K562 (cell line): ENCODE measurements at regions of chr14 and their contacts with region 1.

Region 1: GRCh38 chr14:22653012-22653621 is 9.0 kb upstream of the OR6J1 start:
- DNase-seq: peak; percentile 47 to 68 (median 58)
- ATAC-seq: peak; percentile 87
- H3K4me3 ChIP-seq: no peak overlapping the region
- H3K27ac ChIP-seq: no peak overlapping the region
- H3K4me1 ChIP-seq: no peaks in the 10 kb centered on the region; a peak in 1 of 5 replicates
- H3K27me3 ChIP-seq: no peaks in the 10 kb centered on the region
- CTCF ChIP-seq: peak; percentile 85 to 86 (median 86)
- EP300 ChIP-seq: no peak
- POLR2A ChIP-seq: no peak
- RAD21 ChIP-seq: peak; percentile 80 to 94

Region 2: DNA sequence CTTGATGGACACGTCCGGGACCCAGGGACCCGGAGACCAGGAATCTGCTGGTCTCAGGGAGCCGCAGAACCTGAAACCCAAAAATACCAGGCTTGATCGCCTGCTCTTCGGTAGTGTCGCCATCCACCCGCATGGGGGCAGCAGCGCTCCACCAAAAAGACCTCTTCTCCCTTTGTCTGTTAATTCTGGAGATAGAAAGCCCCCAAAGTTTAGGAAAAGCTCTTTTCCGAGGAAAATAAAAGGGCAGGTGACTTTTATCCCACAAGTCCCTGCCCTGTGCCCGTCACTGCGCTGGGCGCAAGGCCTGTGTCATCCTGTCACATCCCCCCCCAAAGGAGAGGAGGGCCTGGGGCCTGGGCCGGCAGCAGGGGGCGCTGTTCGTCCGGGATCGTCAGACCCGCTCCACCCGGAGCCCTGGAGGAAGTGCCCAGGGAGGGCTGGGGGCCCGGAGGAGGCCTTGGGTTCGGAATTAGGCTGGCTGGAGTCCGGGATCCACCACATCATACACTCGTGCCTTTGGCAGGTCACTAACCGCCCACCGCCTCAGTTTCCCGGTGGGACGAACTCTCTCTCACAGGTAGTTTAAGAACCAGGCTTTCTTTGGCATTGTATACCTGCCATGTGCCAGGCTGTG is 96.0 kb before region 1 on chr14:
- CTCF ChIA-PET with region 1: interaction called, 58 read pairs
- POLR2A ChIA-PET with region 1: interaction called, 5 read pairs
- in situ Hi-C with region 1: no loop called
- intact Hi-C with region 1: loop called (anchors 1 kb)
- DNase-seq: peak; percentile 80 to 88 (median 82)
- ATAC-seq: peak; percentile 88
- H3K4me3 ChIP-seq: 0 out of 2 replicates have a peak overlapping the region, but pooled peaks have one; percentile 21
- H3K27ac ChIP-seq: peak overlapping the region; percentile 71
- H3K4me1 ChIP-seq: peaks cover 32 to 42% of the 10 kb centered on the region in 2 experiments
- H3K27me3 ChIP-seq: no peaks in the 10 kb centered on the region
- CTCF ChIP-seq: peak; percentile 75 to 98 (median 90); a peak in 5 of 6 replicates
- EP300 ChIP-seq: no peak
- POLR2A ChIP-seq: no peak
- RAD21 ChIP-seq: peak; percentile 93 to 96

Region 3: DNA sequence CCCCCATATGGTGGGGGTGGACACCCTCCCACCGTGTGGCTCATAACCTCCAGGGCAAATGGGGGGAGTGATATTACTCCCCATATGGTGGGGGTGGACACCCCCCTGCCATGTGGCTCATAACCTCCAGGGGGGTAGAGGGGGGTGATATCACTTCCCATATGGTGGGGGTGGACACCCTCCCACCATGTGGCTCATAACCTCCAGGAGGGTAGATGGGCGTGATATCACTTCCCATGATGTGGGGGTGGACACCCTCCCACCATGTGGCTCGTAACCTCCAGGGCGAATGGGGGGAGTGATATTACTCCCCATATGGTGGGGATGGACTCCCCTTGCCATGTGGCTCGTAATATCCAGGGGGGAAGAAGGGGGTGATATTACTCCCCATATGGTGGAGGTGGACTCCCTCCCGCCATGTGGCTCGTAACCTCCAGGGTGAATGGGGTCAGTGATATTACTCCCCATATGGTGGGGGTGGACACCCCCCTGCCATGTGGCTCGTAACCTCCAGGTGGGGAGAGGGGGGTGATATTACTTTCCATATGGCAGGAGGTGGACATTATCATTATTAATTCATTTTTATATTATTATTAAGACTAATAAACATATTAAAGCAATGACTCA is 62.2 kb after region 1 on chr14:
- CTCF ChIA-PET with region 1: no interaction called
- POLR2A ChIA-PET with region 1: no interaction called
- in situ Hi-C with region 1: no loop called
- intact Hi-C with region 1: loop called (anchors 1 kb)
- DNase-seq: peak; percentile 59 to 83 (median 62)
- ATAC-seq: peak; percentile 67
- H3K4me3 ChIP-seq: no peak overlapping the region
- H3K27ac ChIP-seq: peak overlapping the region; percentile 90
- H3K4me1 ChIP-seq: peaks cover 8 to 10% of the 10 kb centered on the region in 2 experiments; a peak in 4 of 5 replicates
- H3K27me3 ChIP-seq: no peaks in the 10 kb centered on the region
- CTCF ChIP-seq: no peak
- EP300 ChIP-seq: peak; percentile 20; the same call in 1 of the 2 replicates
- POLR2A ChIP-seq: no peak
- RAD21 ChIP-seq: no peak

Region 4: DNA sequence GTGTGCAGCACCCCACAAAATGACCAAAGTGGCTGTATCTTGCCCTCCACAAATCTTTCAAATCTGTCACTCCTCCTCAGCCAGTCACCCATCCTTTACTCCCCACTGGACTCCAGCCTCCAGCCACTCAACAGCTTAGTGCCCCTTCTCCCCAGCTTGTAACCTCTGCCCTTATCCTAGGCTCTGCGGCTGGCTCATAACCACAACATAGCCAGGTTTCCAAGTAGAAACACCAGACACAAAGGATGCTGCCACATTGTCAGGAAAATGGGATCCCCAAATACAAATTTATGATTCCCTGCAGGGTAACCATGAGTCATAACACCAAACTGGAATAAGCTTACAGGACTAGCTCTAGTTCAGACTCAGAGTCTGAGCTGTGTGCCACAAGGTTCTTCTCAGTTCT is 128.5 kb after region 1 on chr14:
- CTCF ChIA-PET with region 1: no interaction called
- POLR2A ChIA-PET with region 1: no interaction called
- in situ Hi-C with region 1: no loop called
- intact Hi-C with region 1: loop called (anchors 1 kb)
- DNase-seq: no peak
- ATAC-seq: no peak
- H3K4me3 ChIP-seq: no peak overlapping the region
- H3K27ac ChIP-seq: no peak overlapping the region
- H3K4me1 ChIP-seq: peaks cover 0 to 8% of the 10 kb centered on the region in 2 experiments; a peak in 3 of 5 replicates
- H3K27me3 ChIP-seq: no peaks in the 10 kb centered on the region
- CTCF ChIP-seq: no peak
- EP300 ChIP-seq: no peak
- POLR2A ChIP-seq: no peak
- RAD21 ChIP-seq: no peak

Region 5: GRCh38 chr14:22852940-22853767 is 200.0 kb after region 1 on chr14:
- CTCF ChIA-PET with region 1: interaction called, 16 read pairs
- POLR2A ChIA-PET with region 1: no interaction called
- in situ Hi-C with region 1: loop called (anchors 10 kb)
- intact Hi-C with region 1: loop called (anchors 2 kb)
- DNase-seq: peak; percentile 81 to 88 (median 86)
- ATAC-seq: peak; percentile 95
- H3K4me3 ChIP-seq: peak overlapping the region; percentile 47
- H3K27ac ChIP-seq: peak overlapping the region; percentile 86
- H3K4me1 ChIP-seq: peaks cover under 1 to 23% of the 10 kb centered on the region in 2 experiments; a peak in 3 of 5 replicates
- H3K27me3 ChIP-seq: no peaks in the 10 kb centered on the region
- CTCF ChIP-seq: peak; percentile 94 to 97 (median 95)
- EP300 ChIP-seq: no peak
- POLR2A ChIP-seq: no peak
- RAD21 ChIP-seq: peak; percentile 97 to 99

Region 6: GRCh38 chr14:23308721-23309445 is 655.8 kb after region 1 on chr14:
- CTCF ChIA-PET with region 1: no interaction called
- POLR2A ChIA-PET with region 1: no interaction called
- in situ Hi-C with region 1: no loop called
- intact Hi-C with region 1: no loop called
- DNase-seq: no peak
- ATAC-seq: no peak
- H3K4me3 ChIP-seq: no peak overlapping the region
- H3K27ac ChIP-seq: no peak overlapping the region
- H3K4me1 ChIP-seq: peaks cover 18 to 23% of the 10 kb centered on the region in 2 experiments; a peak in 4 of 5 replicates
- H3K27me3 ChIP-seq: no peaks in the 10 kb centered on the region
- CTCF ChIP-seq: no peak
- EP300 ChIP-seq: no peak
- POLR2A ChIP-seq: no peak
- RAD21 ChIP-seq: no peak